Heart left ventricle (tissue), 16 donors: ENCODE measurements at regions of chr14 and their contacts with region 1.

Region 1: DNA sequence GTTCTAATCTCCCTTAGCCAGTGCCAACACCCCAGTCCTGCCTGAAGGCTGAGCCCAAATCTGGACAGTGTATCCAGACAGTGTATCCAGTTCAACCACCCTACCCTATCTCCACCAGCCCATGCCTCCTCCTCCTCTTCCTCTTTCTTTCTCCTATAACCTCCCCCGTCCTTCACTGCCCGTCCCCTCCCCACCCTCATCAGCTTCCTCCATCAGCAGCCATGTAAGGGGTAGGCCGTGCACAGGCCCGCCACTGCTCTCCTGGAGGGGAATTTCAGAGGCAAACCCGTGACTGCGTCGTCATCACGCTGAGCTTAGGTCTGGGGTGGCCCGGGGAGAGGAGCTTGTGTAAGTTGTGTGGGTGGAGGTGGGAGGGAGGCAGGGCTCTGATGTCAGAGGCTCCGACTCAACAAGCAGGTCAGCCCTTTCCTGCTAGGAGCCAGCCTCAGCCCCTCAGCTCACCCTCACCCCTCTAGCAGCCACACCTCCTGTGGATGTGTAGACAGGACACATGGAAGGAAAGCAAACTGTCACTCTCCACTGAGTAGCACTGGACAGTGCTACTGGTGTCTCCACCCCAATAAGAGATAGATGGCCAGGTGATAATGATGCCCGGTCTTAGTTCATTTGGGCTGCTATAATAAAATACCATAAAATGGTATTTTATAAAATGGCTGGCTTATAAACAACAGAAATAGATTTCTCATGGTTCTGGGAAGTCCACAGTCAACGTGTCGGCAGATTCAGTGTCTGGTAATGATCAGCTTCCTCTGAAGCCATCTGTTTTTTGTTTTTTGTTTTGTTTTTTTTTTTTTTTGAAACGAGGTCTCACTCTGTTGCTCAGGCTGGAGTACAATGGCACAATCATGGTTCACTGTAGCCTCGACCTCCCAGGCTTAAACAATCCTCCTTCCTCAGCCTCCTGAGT is 50.5 kb downstream of the IRF2BPL start:
- DNase-seq: peak; percentile 36 to 82 (median 70)
- ATAC-seq: peak; percentile 26 to 87 (median 82)
- H3K4me3 ChIP-seq: no peak overlapping the region
- H3K27ac ChIP-seq: peak overlapping the region in 3 of 12 donors; percentile 39 to 81 (median 42)
- H3K4me1 ChIP-seq: peaks cover 0 to 16% (median 0%) of the 10 kb centered on the region in 12 donors
- H3K27me3 ChIP-seq: no peaks in the 10 kb centered on the region
- CTCF ChIP-seq: no peak
- POLR2A ChIP-seq: no peak

Region 2: GRCh38 chr14:77014004-77014604 is 36.0 kb after region 1 on chr14:
- intact Hi-C with region 1: loop called in 1 of 10 experiments (anchors 5 kb)
- DNase-seq: peak in 4 of 5 donors; percentile 79 to 88 (median 81)
- ATAC-seq: peak; percentile 94 to 97 (median 96)
- H3K4me3 ChIP-seq: no peak overlapping the region
- H3K27ac ChIP-seq: peak overlapping the region in 11 of 12 donors; percentile 18 to 88 (median 65)
- H3K4me1 ChIP-seq: peaks cover 0 to 17% (median 10%) of the 10 kb centered on the region in 12 donors
- H3K27me3 ChIP-seq: no peaks in the 10 kb centered on the region
- CTCF ChIP-seq: no peak
- POLR2A ChIP-seq: no peak